Dendritic cell treated with granulocyte-macrophage colony-stimulating factor and Interleukin-4, amounts not matched to agents 40 ng/mL and 50 ng/mL, for 4 days (primary cell): ENCODE measurements at regions of chr4 and their contacts with region 1.

Region 1: GRCh38 chr4:81351654-81352445 is 119.9 kb downstream of the RASGEF1B start:
- H3K4me3 Mint-ChIP-seq: no peak overlapping the region
- H3K27ac Mint-ChIP-seq: no peak overlapping the region
- H3K4me1 Mint-ChIP-seq: no peaks in the 10 kb centered on the region
- H3K27me3 Mint-ChIP-seq: no peaks in the 10 kb centered on the region

Region 2: GRCh38 chr4:81069706-81070331 is 282.0 kb before region 1 on chr4:
- intact Hi-C with region 1: loop called (anchors 1 kb)
- H3K4me3 Mint-ChIP-seq: no peak overlapping the region
- H3K27ac Mint-ChIP-seq: no peak overlapping the region
- H3K4me1 Mint-ChIP-seq: no peaks in the 10 kb centered on the region
- H3K27me3 Mint-ChIP-seq: peaks cover 1% of the 10 kb centered on the region

Region 3: GRCh38 chr4:81523672-81524327 is 171.9 kb after region 1 on chr4:
- intact Hi-C with region 1: no loop called
- H3K4me3 Mint-ChIP-seq: no peak overlapping the region
- H3K27ac Mint-ChIP-seq: no peak overlapping the region
- H3K4me1 Mint-ChIP-seq: no peaks in the 10 kb centered on the region
- H3K27me3 Mint-ChIP-seq: no peaks in the 10 kb centered on the region

Region 4: GRCh38 chr4:81905971-81906370 is 554.1 kb after region 1 on chr4:
- intact Hi-C with region 1: no loop called
- H3K4me3 Mint-ChIP-seq: no peak overlapping the region
- H3K27ac Mint-ChIP-seq: no peak overlapping the region
- H3K4me1 Mint-ChIP-seq: no peaks in the 10 kb centered on the region
- H3K27me3 Mint-ChIP-seq: no peaks in the 10 kb centered on the region